CD14-positive monocyte (primary cell): ENCODE measurements at regions of chr6 and their contacts with region 1.

Region 1: DNA sequence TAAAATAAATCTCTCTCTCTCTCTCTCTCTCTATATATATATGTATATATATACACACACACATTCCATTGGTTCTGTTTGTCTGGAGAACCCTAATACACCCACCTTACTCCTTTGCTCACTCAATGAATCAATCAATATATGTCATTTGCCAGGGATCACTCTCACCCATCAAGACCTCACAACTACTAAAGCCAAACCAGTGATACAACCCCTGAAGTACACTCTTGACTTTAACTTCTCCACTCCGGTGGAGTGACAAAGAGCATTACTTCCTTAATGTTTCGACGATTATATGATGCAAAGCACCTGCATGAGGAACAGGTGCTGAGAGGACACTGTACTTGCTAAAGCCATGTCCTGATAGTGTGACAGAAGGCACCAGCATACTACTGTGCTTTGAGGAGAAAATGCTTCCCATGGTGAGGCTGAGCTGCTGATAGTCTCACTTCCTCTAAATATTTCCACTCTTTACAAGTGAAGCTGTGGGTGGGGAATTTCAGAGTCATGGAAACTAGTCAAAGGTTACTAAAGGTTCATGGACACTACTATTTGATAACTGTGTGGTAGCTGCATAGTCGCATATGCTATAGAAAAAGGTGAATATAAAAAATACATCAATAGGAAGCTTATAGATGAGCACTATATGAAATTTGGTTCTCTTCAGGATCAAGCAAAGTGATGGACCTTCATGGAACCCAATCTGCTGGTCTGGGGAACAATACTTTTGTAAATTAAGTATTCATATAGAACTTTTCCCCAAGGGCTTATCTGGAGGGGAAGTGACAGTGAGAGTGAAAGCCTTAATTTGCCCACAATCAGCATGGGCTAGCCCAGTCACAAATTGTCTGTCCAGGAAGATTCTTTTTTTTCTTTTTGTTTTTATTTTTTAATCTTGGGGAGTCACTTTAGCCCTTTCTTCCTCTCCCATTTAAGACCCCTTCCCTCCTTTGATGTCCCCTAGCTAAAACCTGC is 141.9 kb upstream of the NEDD9 start:
- DNase-seq: peak; percentile 79 to 90 (median 90)
- H3K4me3 ChIP-seq: peak overlapping the region in 1 of 3 experiments; percentile 53
- H3K4me3 Mint-ChIP-seq: peak overlapping the region; percentile 28 to 71
- H3K27ac ChIP-seq: peak overlapping the region; percentile 66 to 91
- H3K27ac Mint-ChIP-seq: peak overlapping the region; percentile 90 to 97 (median 96)
- H3K4me1 ChIP-seq: peaks cover 86 to 97% of the 10 kb centered on the region in 2 donors
- H3K4me1 Mint-ChIP-seq: peaks cover 82% of the 10 kb centered on the region
- H3K27me3 ChIP-seq: no peaks in the 10 kb centered on the region
- H3K27me3 Mint-ChIP-seq: peaks cover 0 to 1% (median 0%) of the 10 kb centered on the region in 3 donors
- CTCF ChIP-seq: no peak

Region 2: DNA sequence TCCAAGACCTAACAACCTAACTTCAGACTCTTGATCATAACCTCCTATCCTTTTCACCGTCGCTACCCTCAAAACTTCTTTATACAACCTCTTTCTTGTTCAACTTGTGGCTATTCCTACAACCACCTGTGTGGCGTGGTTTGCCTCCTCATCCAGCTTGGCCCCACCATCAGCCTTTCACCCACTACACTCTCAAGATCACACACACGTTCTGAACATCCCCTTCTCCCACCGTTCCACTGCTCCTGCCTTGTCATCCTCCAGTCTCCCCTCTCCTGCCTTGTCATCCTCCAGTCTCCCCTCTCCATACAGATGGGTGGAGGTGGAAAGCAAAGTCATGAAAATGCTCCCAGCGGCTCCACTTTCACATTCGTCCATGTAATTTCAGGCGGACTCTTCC is 550.0 kb before region 1 on chr6:
- intact Hi-C with region 1: no loop called
- DNase-seq: no peak
- H3K4me3 ChIP-seq: no peak overlapping the region
- H3K4me3 Mint-ChIP-seq: no peak overlapping the region
- H3K27ac ChIP-seq: no peak overlapping the region
- H3K27ac Mint-ChIP-seq: no peak overlapping the region
- H3K4me1 ChIP-seq: no peaks in the 10 kb centered on the region
- H3K4me1 Mint-ChIP-seq: no peaks in the 10 kb centered on the region
- H3K27me3 ChIP-seq: no peaks in the 10 kb centered on the region
- H3K27me3 Mint-ChIP-seq: peaks cover 0 to 6% (median 1%) of the 10 kb centered on the region in 3 donors
- CTCF ChIP-seq: no peak

Region 3: GRCh38 chr6:11392778-11393507 is 18.6 kb after region 1 on chr6:
- intact Hi-C with region 1: loop called in 1 of 2 experiments (anchors 2 kb)
- DNase-seq: peak; percentile 39 to 71 (median 51)
- H3K4me3 ChIP-seq: peak overlapping the region in 1 of 3 experiments; percentile 34
- H3K4me3 Mint-ChIP-seq: peak overlapping the region; percentile 37 to 67
- H3K27ac ChIP-seq: peak overlapping the region; percentile 23 to 53
- H3K27ac Mint-ChIP-seq: peak overlapping the region; percentile 75 to 90 (median 82)
- H3K4me1 ChIP-seq: peaks cover 40 to 45% of the 10 kb centered on the region in 2 donors
- H3K4me1 Mint-ChIP-seq: peaks cover 31% of the 10 kb centered on the region
- H3K27me3 ChIP-seq: no peaks in the 10 kb centered on the region
- H3K27me3 Mint-ChIP-seq: peaks cover 0 to 2% (median 0%) of the 10 kb centered on the region in 3 donors
- CTCF ChIP-seq: no peak

Region 4: DNA sequence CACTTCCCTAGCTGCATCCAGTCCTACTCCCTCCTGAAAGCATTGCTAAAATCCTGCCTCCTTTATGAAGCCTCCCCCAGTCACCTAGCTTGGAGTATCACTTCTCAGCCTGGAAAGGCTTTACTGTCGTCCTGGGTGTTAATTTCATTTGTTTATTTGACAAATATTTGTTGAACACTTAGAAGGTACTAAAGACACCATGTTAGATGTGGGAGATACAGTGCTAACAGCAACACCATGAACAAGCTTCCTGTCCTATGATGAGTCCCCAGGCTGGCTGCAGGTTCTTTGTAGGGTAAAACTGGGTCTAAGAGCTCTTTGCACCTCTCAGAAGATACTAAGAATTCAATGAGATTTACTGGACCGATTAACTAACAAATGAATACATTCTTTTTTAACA is 54.0 kb after region 1 on chr6:
- intact Hi-C with region 1: no loop called
- DNase-seq: no peak
- H3K4me3 ChIP-seq: no peak overlapping the region
- H3K4me3 Mint-ChIP-seq: no peak overlapping the region
- H3K27ac ChIP-seq: no peak overlapping the region
- H3K27ac Mint-ChIP-seq: peak overlapping the region in 1 of 7 donors; percentile 5
- H3K4me1 ChIP-seq: peaks cover 0 to 8% of the 10 kb centered on the region in 2 donors
- H3K4me1 Mint-ChIP-seq: peaks cover 21% of the 10 kb centered on the region
- H3K27me3 ChIP-seq: no peaks in the 10 kb centered on the region
- H3K27me3 Mint-ChIP-seq: peaks cover 0 to 3% (median 2%) of the 10 kb centered on the region in 3 donors
- CTCF ChIP-seq: no peak

Region 5: GRCh38 chr6:11722805-11723631 is 348.7 kb after region 1 on chr6:
- intact Hi-C with region 1: no loop called
- DNase-seq: no peak
- H3K4me3 ChIP-seq: no peak overlapping the region
- H3K4me3 Mint-ChIP-seq: no peak overlapping the region
- H3K27ac ChIP-seq: no peak overlapping the region
- H3K27ac Mint-ChIP-seq: peak overlapping the region in 3 of 7 donors; percentile 16 to 68 (median 64)
- H3K4me1 ChIP-seq: peaks cover 7 to 9% of the 10 kb centered on the region in 2 donors
- H3K4me1 Mint-ChIP-seq: peaks cover 10% of the 10 kb centered on the region
- H3K27me3 ChIP-seq: no peaks in the 10 kb centered on the region
- H3K27me3 Mint-ChIP-seq: peaks cover 0 to 2% (median 0%) of the 10 kb centered on the region in 3 donors
- CTCF ChIP-seq: no peak

Region 6: GRCh38 chr6:12126051-12126450 is 751.7 kb after region 1 on chr6:
- intact Hi-C with region 1: no loop called
- DNase-seq: no peak
- H3K4me3 ChIP-seq: no peak overlapping the region
- H3K4me3 Mint-ChIP-seq: no peak overlapping the region
- H3K27ac ChIP-seq: no peak overlapping the region
- H3K27ac Mint-ChIP-seq: no peak overlapping the region
- H3K4me1 ChIP-seq: peaks cover 5 to 9% of the 10 kb centered on the region in 2 donors
- H3K4me1 Mint-ChIP-seq: peaks cover 12% of the 10 kb centered on the region
- H3K27me3 ChIP-seq: no peaks in the 10 kb centered on the region
- H3K27me3 Mint-ChIP-seq: no peaks in the 10 kb centered on the region
- CTCF ChIP-seq: no peak